ENCODE measurements at regions of chr15 and their contacts with region 1.

Region 1: DNA sequence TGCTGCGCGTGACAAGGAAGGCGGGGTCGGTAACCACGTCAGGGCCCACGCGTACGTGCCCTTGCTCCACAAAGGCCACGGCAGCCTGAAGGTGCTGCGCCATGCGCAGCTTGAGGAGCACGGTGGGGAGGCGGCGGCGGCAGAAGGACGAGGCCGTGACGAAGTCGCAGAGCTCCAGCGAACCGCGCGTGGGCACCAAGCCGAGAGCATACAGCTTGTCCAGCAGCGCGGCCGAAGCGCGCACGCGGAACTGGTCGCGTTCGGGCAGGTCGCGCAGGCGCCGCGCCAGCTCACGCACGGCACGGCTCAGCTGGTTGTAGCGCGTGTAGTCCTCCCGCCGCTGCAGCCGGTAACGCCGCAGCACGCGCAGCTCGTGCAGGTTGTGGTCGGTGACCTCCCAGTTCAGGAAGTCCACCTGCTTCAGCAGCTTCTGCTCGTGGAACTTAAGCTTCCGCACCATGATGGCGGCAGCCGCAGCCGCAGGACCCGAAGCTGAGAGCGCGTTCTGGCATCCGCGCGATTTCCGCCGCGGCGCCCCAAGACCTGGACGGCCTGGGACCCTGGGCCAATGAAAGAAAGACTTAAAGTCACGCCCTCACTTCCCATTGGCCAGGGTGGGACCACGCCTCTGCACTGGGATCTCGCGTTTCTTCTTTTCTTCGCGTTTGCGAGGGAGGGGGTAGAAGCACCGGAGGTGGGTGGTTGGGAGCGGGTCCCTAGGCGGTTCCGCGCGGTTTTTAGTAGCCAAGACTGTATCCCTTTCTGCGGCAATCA is at the start of gene IMP3:
- DNase-seq: peak; percentile 98
- H3K4me3 Mint-ChIP-seq: peak within 1 kb of the TSS; percentile 87
- H3K27ac Mint-ChIP-seq: peak within 1 kb of the TSS; percentile 70
- H3K4me1 Mint-ChIP-seq: peaks cover 18% of the 10 kb centered on the region
- H3K27me3 Mint-ChIP-seq: no peaks in the 10 kb centered on the region
- CTCF ChIP-seq: no peak
- total RNA-seq, gene IMP3: 45.8 and 58.0 TPM in 2 replicates

Region 2: GRCh38 chr15:75453703-75454470 is 186.0 kb before region 1 on chr15:
- CTCF ChIA-PET with region 1: interaction called, 3 read pairs
- POLR2A ChIA-PET with region 1: interaction called, 182 read pairs
- intact Hi-C with region 1: loop called (anchors 2 kb)
- DNase-seq: peak; percentile 100
- H3K4me3 Mint-ChIP-seq: peak overlapping the region; percentile 89
- H3K27ac Mint-ChIP-seq: peak overlapping the region; percentile 85
- H3K4me1 Mint-ChIP-seq: peaks cover 22% of the 10 kb centered on the region
- H3K27me3 Mint-ChIP-seq: no peaks in the 10 kb centered on the region
- CTCF ChIP-seq: no peak

Region 3: GRCh38 chr15:75578948-75579920 is 60.7 kb before region 1 on chr15 and contains the start of gene PTPN9:
- CTCF ChIA-PET with region 1: no interaction called
- POLR2A ChIA-PET with region 1: interaction called, 40 read pairs
- intact Hi-C with region 1: loop called (anchors 10 kb)
- DNase-seq: peak; percentile 74
- H3K4me3 Mint-ChIP-seq: peak within 1 kb of the TSS; percentile 95
- H3K27ac Mint-ChIP-seq: peak within 1 kb of the TSS; percentile 97
- H3K4me1 Mint-ChIP-seq: peaks cover 9% of the 10 kb centered on the region
- H3K27me3 Mint-ChIP-seq: no peaks in the 10 kb centered on the region
- CTCF ChIP-seq: peak; percentile 54
- total RNA-seq, gene PTPN9: 31.6 and 33.0 TPM in 2 replicates

Region 4: GRCh38 chr15:75655931-75656330 is 16.0 kb after region 1 on chr15:
- CTCF ChIA-PET with region 1: interaction called, 9 read pairs
- POLR2A ChIA-PET with region 1: interaction called, 58 read pairs
- intact Hi-C with region 1: no loop called
- DNase-seq: no peak
- H3K4me3 Mint-ChIP-seq: no peak overlapping the region
- H3K27ac Mint-ChIP-seq: peak overlapping the region; percentile 5
- H3K4me1 Mint-ChIP-seq: peaks cover 53% of the 10 kb centered on the region
- H3K27me3 Mint-ChIP-seq: no peaks in the 10 kb centered on the region
- CTCF ChIP-seq: no peak

Region 5: GRCh38 chr15:75666823-75667501 is 27.1 kb after region 1 on chr15:
- CTCF ChIA-PET with region 1: interaction called, 9 read pairs
- POLR2A ChIA-PET with region 1: interaction called, 111 read pairs
- intact Hi-C with region 1: loop called (anchors 2 kb)
- DNase-seq: peak; percentile 93
- H3K4me3 Mint-ChIP-seq: peak overlapping the region; percentile 65
- H3K27ac Mint-ChIP-seq: peak overlapping the region; percentile 100
- H3K4me1 Mint-ChIP-seq: peaks cover 57% of the 10 kb centered on the region
- H3K27me3 Mint-ChIP-seq: no peaks in the 10 kb centered on the region
- CTCF ChIP-seq: no peak

Region 6: DNA sequence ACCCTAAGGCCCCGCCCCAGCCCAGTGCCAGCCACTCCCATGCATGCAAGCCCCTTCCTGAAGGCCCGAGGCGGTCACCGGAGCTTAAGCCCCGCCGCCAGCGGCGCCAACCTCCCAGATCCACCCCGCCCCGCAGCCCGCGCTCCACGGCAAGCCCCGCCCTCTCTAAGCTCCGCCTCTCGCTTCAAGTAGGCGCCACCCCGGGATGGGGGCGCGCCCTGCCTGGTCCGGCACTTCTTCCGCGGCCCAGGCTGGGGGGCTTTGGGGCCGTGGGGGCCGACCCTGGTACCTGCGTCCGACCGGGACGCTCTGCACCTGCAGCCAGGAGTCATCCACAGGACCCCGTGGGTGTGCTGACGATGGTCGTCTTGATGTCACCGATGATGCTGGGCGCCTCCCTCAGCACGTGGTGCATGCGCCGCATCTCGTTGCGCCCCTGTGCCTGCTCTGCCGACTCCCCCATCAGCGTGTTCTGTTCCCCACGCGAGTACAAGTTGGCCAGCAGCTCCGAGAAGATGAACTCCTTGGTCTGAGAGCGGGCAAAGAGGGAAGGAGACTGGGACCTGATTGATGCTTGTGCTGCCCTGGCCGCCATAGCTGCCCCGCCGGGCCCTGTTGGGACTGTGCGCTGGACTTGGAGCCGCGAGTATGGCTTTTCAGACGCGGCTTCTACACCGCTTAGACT is 98.9 kb after region 1 on chr15:
- CTCF ChIA-PET with region 1: no interaction called
- POLR2A ChIA-PET with region 1: no interaction called
- intact Hi-C with region 1: loop called (anchors 5 kb)
- DNase-seq: peak; percentile 88
- H3K4me3 Mint-ChIP-seq: peak overlapping the region; percentile 72
- H3K27ac Mint-ChIP-seq: no peak overlapping the region
- H3K4me1 Mint-ChIP-seq: peaks cover 7% of the 10 kb centered on the region
- H3K27me3 Mint-ChIP-seq: no peaks in the 10 kb centered on the region
- CTCF ChIP-seq: no peak

Measured in MCF 10A (cell line).